Heart right ventricle (tissue), 16 donors: ENCODE measurements at regions of chr7 and their contacts with region 1.

Region 1: GRCh38 chr7:56074371-56074791 is 10.3 kb downstream of the SUMF2 start:
- DNase-seq: peak; percentile 82 to 89
- ATAC-seq: peak; percentile 86 to 95 (median 92)
- H3K4me3 ChIP-seq: no peak overlapping the region
- H3K27ac ChIP-seq: peak overlapping the region in 3 of 10 donors; percentile 4 to 34 (median 32)
- H3K4me1 ChIP-seq: peaks cover 7 to 21% (median 12%) of the 10 kb centered on the region in 9 donors
- H3K27me3 ChIP-seq: no peaks in the 10 kb centered on the region
- CTCF ChIP-seq: peak; percentile 89 to 98 (median 94)

Region 2: DNA sequence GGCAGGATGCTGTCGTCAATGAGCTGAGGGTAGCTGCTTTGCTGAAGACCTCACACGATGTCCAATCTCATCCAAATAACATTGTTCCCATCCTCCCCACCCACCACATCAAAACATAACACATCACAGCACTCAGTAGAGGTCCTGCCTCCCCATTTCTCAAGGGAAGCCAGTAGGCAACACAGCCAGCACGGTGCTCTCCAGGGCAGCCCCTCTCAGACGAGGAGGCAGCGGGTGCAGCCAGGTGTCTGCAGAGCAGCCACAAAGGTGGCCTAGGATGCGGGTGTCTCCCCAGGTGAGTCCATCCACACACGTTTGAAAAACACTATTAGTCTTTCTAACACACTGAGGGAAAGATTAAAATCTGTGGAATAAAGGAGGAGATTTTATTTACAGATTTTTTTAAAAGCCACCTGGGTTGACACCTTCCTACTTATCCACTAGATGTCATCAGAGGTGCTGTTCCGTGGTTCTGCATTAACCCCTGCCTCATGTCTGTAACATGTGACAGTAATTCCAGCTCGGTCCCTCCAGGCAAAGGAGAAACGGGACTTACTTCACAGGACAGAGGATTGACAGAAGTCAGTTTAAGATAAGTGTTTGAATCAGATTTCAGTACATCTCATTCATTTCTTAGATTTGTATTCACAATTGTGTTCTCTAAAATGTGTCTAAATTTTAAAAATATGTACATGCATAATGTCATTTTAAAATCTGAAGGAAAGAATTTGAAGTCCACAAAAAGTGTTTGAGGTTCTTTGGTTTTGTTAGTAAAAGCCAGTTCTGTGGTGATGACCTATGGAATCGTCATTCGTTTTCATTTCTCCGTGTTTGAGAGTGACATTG is 641.2 kb before region 1 on chr7:
- intact Hi-C with region 1: loop called in 1 of 10 experiments (anchors 5 kb)
- DNase-seq: no peak
- ATAC-seq: peak in 6 of 8 donors; percentile 36 to 71 (median 58)
- H3K4me3 ChIP-seq: no peak overlapping the region
- H3K27ac ChIP-seq: no peak overlapping the region
- H3K4me1 ChIP-seq: peaks cover 0 to 8% (median 0%) of the 10 kb centered on the region in 9 donors
- H3K27me3 ChIP-seq: no peaks in the 10 kb centered on the region
- CTCF ChIP-seq: peak in 8 of 9 donors; percentile 24 to 61 (median 50)

Region 3: GRCh38 chr7:55641273-55641691 is 433.1 kb before region 1 on chr7:
- intact Hi-C with region 1: loop called in 7 of 10 experiments (anchors 2 to 10 kb)
- DNase-seq: peak in 1 of 2 donors; percentile 51
- ATAC-seq: peak; percentile 75 to 96 (median 88)
- H3K4me3 ChIP-seq: no peak overlapping the region
- H3K27ac ChIP-seq: no peak overlapping the region
- H3K4me1 ChIP-seq: peaks cover 0 to 7% (median 0%) of the 10 kb centered on the region in 9 donors
- H3K27me3 ChIP-seq: no peaks in the 10 kb centered on the region
- CTCF ChIP-seq: peak; percentile 55 to 85 (median 80)

Region 4: GRCh38 chr7:56003749-56004148 is 70.6 kb before region 1 on chr7:
- intact Hi-C with region 1: loop called (anchors 1 to 10 kb)
- DNase-seq: no peak
- ATAC-seq: no peak
- H3K4me3 ChIP-seq: no peak overlapping the region
- H3K27ac ChIP-seq: no peak overlapping the region
- H3K4me1 ChIP-seq: peaks cover 0 to 12% (median 0%) of the 10 kb centered on the region in 9 donors
- H3K27me3 ChIP-seq: no peaks in the 10 kb centered on the region
- CTCF ChIP-seq: no peak

Region 5: GRCh38 chr7:56009695-56010094 is 64.7 kb before region 1 on chr7:
- intact Hi-C with region 1: loop called (anchors 1 to 10 kb)
- DNase-seq: peak; percentile 14 to 15
- ATAC-seq: peak in 7 of 8 donors; percentile 29 to 90 (median 67)
- H3K4me3 ChIP-seq: no peak overlapping the region
- H3K27ac ChIP-seq: no peak overlapping the region
- H3K4me1 ChIP-seq: peaks cover 0 to 9% (median 0%) of the 10 kb centered on the region in 9 donors
- H3K27me3 ChIP-seq: no peaks in the 10 kb centered on the region
- CTCF ChIP-seq: no peak